Right ventricle myocardium superior (tissue), 1 donor: ENCODE measurements at regions of chr1 and their contacts with region 1.

Region 1: DNA sequence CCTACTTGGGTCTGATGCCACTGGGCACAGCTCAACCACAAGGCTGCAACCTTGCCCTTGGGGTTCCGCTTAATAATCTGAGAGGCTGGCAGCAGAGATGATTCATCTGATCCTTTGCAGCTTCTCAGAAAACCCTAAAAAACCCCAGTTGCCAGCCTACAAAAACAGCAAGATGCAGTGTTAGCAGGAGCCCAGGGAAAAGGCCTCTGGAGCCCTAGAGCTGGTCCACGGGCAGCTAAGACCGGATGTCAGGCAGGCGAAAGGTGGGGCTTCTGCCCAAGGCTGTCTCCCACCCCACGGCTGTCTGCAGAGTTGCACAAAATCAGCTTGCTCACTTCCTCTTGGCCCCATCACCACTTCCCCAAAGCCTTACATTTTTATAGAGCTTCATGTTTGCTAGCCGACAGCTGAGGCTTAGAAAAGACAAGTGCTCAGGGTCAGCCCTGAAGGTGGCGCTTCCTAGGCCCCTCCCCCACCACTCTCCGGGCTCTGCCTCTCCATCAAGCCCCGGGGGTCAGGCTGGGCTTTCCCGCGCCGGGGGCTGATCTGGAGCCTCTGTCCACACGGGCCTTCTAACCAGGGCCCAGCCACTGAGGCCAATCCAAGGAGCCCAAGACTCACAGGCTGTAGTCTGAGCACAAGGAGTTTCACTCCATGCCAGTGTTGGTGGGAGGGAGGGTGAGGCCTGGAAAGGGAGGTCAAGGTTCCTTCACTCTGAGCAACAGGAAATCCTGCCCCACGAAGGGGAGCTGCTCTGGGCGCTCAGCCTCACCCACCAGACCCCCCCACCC is 4.2 kb upstream of the ADORA3 start:
- DNase-seq: peak; percentile 87
- ATAC-seq: peak; percentile 75

Region 2: DNA sequence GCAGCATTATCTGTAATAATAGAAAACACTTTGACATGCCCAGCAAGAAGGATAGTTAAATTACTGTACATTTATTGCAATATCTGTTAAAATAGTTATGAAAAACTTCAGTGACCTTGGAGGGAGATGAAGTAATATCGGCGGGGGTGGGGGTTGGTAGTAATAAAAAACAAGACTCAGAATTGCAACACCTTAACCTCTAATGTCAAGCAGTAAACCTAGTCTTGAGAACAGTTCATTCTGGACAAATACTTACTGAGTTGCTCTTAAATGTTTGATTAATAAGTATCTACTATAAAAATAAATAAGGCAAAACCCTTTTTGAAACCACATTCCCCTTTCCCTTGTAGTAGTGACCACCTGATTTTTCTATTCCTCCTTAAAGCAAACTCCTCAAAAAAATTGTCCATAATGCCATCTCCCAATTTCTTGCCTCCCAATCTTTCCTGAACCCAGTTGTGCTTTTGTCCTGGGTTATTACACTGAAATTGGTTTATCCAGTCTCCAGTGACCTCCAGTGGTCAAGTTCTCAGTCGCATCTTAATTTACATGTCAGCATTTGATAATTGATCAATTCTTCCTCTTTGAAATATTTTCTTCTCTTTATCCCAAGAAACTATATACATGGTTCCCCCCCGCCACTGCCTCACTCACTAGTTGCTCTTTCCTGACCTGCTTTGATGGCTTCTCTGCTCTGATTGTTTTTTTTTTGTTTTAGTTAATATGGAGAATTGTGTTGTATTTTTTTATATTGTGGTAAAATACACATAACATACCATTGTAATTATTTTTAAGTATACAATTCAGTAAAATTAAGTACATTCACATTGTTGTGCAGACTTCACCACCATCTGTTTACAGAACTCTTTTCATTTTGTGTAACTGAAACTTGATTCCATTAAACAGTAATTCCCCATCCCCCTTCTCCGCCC is 148.7 kb after region 1 on chr1:
- intact Hi-C with region 1: loop called (anchors 2 kb)
- DNase-seq: no peak
- ATAC-seq: peak; percentile 75

Region 3: DNA sequence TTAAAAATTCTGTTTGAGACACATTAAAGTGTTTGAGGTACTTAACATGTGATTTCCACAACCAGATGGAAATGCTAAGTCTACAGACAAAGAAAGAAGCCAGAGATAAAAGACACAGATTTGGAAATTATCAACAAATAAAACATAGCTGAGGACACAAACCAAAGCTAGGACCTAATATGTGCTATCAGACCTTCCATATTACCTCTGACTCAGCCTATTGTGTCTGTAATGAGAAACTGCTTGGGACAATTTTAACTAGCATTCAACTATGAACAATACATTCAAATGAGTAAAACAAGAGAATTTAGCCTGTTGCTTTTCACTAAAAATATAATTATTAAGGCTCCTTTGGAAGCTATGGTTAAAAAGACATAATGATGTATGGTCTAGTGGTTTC is 1055.7 kb after region 1 on chr1:
- intact Hi-C with region 1: no loop called
- DNase-seq: no peak
- ATAC-seq: no peak